ENCODE measurements at regions of chr20 and their contacts with region 1.

Region 1: GRCh38 chr20:8782804-8783203 is 286.1 kb upstream of the PLCB4 start:
- DNase-seq: no peak
- H3K4me3 ChIP-seq: no peak overlapping the region
- H3K27ac ChIP-seq: no peak overlapping the region
- H3K4me1 ChIP-seq: no peaks in the 10 kb centered on the region
- H3K27me3 ChIP-seq: no peaks in the 10 kb centered on the region
- CTCF ChIP-seq: no peak
- EP300 ChIP-seq: no peak
- POLR2A ChIP-seq: no peak

Region 2: GRCh38 chr20:8664778-8665177 is 118.0 kb before region 1 on chr20:
- intact Hi-C with region 1: no loop called
- DNase-seq: no peak
- H3K4me3 ChIP-seq: no peak overlapping the region
- H3K27ac ChIP-seq: no peak overlapping the region
- H3K4me1 ChIP-seq: peaks cover 0 to 7% (median under 1%) of the 10 kb centered on the region in 4 donors
- H3K27me3 ChIP-seq: no peaks in the 10 kb centered on the region
- CTCF ChIP-seq: no peak
- EP300 ChIP-seq: no peak
- POLR2A ChIP-seq: no peak

Region 3: DNA sequence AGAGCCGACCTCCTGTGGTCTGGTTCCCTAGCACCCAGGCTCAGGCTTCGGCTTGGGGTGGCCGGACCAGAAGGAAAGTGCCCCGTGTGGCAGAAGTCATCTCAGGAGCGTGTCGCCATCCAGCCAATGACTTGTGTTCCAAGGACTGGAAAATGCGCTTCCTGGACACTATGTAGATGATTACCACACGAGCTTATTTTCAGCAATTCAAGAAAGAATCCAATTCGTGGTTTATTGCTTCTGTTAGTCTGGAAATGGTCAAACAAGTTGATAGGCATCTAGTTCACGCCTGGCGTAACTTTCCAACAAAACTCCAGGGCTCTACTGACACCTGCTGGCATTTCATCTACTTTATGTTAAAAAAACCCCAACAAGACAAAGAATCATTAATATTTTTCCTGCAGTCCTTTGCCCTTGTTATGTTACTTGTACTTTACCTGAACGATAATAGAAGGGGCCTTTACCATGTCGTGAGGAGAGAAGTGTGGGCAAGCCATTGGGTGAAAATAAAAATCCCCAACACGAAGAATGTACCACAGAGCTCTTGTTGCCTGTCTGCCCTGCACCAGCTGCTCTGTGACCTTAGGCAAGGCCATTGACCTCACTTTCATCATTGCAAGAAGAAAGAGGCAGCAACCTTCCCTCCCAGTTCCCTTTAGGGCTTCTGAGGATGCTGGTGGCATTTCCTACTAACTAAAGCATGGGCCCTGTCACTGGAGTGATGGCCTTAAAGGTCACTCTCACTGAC is 576.9 kb after region 1 on chr20:
- intact Hi-C with region 1: loop called (anchors 10 kb)
- DNase-seq: peak; percentile 38 to 86
- H3K4me3 ChIP-seq: no peak overlapping the region
- H3K27ac ChIP-seq: peak overlapping the region in 2 of 5 donors; percentile 33 to 46
- H3K4me1 ChIP-seq: peaks cover 0 to 15% (median 2%) of the 10 kb centered on the region in 4 donors
- H3K27me3 ChIP-seq: no peaks in the 10 kb centered on the region
- CTCF ChIP-seq: peak in 4 of 7 experiments; percentile 36 to 69 (median 48)
- EP300 ChIP-seq: no peak
- POLR2A ChIP-seq: no peak

Measured in stomach (tissue), 19 donors.